ENCODE measurements at regions of chr7 and their contacts with region 1.

Region 1: DNA sequence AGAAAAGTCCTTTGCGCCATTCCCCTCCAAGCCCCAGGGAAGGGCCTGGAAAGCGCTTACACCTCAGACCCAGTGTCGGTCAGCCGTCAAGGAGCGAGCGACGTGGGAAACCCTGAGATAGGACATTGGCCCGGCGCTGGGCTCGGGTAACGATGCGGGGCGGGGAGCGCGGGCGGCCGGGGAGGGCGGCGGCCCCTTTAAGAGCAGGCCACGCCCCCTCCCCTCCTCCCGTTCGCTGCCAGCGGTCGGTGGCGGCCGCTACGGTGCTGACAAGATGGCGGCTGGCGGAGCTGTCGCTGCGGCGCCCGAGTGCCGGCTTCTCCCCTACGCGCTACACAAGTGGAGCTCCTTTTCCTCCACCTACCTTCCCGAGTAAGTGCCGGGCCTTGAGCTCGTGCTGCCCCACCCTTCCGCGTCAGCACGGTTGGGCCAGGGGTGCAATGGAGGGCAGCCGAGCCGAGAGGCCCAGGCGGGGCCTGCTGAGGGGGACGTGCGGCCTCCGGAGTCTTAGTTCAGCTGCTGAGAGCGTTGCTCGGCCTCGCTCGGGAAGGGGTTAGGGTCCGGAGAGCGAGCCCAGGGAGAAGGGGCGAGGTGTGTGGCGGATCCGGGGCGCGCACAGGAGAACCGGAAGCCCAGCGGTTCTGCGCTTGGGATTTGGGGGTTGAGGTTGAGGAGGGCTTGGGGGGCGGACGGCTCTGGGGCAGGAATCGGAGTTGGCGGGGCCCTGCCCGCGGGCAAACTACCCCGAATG is at the start of gene MKLN1:
- DNase-seq: peak; percentile 87
- H3K4me3 Mint-ChIP-seq: peak within 1 kb of the TSS; percentile 96
- H3K27ac Mint-ChIP-seq: peak within 1 kb of the TSS; percentile 97
- H3K4me1 Mint-ChIP-seq: peaks cover 66% of the 10 kb centered on the region
- H3K27me3 Mint-ChIP-seq: no peaks in the 10 kb centered on the region
- total RNA-seq, gene MKLN1: 31.1 and 34.0 TPM in 2 replicates

Region 2: DNA sequence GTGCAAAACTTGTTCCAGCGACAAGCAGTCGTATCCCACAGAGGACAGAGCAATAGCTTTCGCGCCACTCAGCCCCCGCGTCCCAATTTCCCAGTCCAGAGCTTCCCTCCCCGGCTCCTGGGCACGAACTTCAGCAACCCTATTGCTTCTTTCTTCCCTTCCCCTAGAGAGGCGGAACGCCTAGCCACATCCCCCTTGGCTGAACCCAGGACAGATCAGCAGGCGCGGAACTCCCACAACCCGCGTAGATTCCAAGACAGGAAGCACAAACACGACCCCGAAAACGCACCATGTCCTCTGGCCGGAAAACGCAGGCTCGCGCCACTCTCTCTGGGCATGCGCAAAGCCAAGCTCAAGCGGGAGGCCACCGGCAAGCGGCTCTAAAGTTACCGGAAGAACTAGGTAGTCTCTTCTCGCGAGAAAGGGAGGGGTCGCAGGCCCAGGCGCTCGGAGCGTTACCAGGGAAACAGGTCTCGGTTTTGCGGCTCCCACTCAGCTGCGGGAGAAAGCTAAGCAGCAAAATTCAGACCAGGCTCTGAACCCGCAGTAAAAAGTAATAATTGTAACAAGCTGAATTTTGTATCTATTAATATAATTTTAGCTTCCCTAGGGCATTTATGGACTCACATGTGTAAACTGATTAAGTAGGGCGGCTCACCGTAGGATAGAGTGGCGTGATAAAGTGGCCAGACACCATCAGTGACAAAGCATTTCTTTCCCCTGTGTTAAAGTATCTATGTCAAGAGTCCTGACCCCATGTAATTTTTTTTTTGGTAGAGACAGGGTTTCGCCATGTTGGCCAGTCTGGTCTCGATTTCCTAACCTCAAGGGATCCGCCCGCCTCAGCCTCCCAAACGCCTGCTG is 1122.5 kb before region 1 on chr7 and contains the start of gene TMEM209:
- intact Hi-C with region 1: loop called (anchors 10 kb)
- DNase-seq: peak; percentile 93
- H3K4me3 Mint-ChIP-seq: peak within 1 kb of the TSS; percentile 95
- H3K27ac Mint-ChIP-seq: peak within 1 kb of the TSS; percentile 97
- H3K4me1 Mint-ChIP-seq: peaks cover 32% of the 10 kb centered on the region
- H3K27me3 Mint-ChIP-seq: no peaks in the 10 kb centered on the region
- total RNA-seq, gene TMEM209: 47.4 and 55.0 TPM in 2 replicates

Region 3: DNA sequence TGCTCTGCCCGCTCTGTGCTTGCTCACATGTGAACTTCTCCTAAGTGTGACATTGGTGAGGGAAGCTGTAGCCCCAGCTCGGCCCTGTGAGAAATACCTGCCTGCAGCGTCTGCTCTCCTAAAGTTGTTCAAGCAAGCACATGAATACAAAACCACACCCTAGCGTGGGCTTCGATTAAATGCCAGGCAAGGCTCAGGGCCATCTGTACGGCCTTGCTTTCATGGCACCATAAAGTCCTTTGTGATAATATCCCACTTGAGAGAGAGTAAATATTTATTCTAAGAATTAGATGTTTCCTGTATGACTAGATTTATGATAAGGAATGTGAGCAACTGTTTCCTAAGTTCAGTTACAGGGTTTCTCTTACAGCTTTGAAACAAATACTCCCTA is 331.0 kb before region 1 on chr7:
- intact Hi-C with region 1: no loop called
- DNase-seq: no peak
- H3K4me3 Mint-ChIP-seq: peak overlapping the region; percentile 50
- H3K27ac Mint-ChIP-seq: peak overlapping the region; percentile 84
- H3K4me1 Mint-ChIP-seq: peaks cover 59% of the 10 kb centered on the region
- H3K27me3 Mint-ChIP-seq: no peaks in the 10 kb centered on the region

Region 4: DNA sequence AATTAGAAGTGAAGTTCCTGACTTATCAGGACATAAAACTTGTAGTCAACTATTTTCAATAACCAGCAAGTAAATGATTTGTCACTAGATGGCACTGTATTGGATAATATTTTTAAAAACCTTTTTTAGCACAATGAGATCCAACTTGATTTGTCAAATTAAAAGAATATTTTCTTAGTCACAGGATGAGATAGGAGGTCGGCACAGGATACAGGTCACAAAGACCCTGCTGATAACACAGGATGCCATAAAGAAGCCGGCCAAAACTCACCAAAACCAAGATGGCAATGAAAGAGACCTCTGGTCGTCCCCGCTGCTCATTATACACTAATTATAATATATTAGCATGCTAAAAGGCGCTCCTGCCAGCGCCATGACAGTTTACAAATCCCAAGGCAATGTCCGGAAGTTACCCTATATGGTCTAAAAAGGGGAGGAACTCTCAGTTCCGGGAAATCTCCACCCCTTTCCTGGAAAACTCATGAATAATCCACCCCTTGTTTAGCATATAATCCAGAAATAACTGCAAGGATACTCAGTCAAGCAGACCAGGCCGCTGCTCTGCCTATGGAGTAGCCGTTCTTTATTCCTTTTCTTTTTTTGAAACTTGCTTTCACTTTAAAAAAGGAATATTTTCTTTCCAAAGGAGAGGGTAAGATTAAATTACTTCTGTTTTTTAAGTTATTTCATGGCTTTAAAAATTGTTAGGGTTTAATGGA is 255.9 kb before region 1 on chr7:
- intact Hi-C with region 1: loop called (anchors 1 kb)
- DNase-seq: no peak
- H3K4me3 Mint-ChIP-seq: no peak overlapping the region
- H3K27ac Mint-ChIP-seq: no peak overlapping the region
- H3K4me1 Mint-ChIP-seq: peaks cover 60% of the 10 kb centered on the region
- H3K27me3 Mint-ChIP-seq: no peaks in the 10 kb centered on the region

Region 5: GRCh38 chr7:131231381-131232220 is 96.2 kb before region 1 on chr7:
- intact Hi-C with region 1: loop called (anchors 1 kb)
- DNase-seq: peak; percentile 65
- H3K4me3 Mint-ChIP-seq: peak overlapping the region; percentile 50
- H3K27ac Mint-ChIP-seq: peak overlapping the region; percentile 86
- H3K4me1 Mint-ChIP-seq: peaks cover 62% of the 10 kb centered on the region
- H3K27me3 Mint-ChIP-seq: no peaks in the 10 kb centered on the region

Region 6: GRCh38 chr7:131307627-131308026 is 20.2 kb before region 1 on chr7:
- intact Hi-C with region 1: no loop called
- DNase-seq: no peak
- H3K4me3 Mint-ChIP-seq: no peak overlapping the region
- H3K27ac Mint-ChIP-seq: no peak overlapping the region
- H3K4me1 Mint-ChIP-seq: peaks cover 6% of the 10 kb centered on the region
- H3K27me3 Mint-ChIP-seq: no peaks in the 10 kb centered on the region

Region 7: GRCh38 chr7:131424219-131424822 is 96.5 kb after region 1 on chr7:
- intact Hi-C with region 1: loop called (anchors 1 kb)
- DNase-seq: no peak
- H3K4me3 Mint-ChIP-seq: no peak overlapping the region
- H3K27ac Mint-ChIP-seq: no peak overlapping the region
- H3K4me1 Mint-ChIP-seq: peaks cover 9% of the 10 kb centered on the region
- H3K27me3 Mint-ChIP-seq: no peaks in the 10 kb centered on the region

Measured in activated T-helper 1 cell treated with anti-CD3 and anti-CD28 coated beads, Interleukin-12 subunit alpha, Interleukin-12 subunit beta, Interleukin-2, Interleukin-4 antibody, amounts not matched to agents 30 ng/mL and 10 ng/mL and 1 ng/mL, durations not matched to agents 14 hours and 24 hours and 36 hours (primary cell).